Endothelial cell of umbilical vein (primary cell): ENCODE measurements at regions of chr2 and their contacts with region 1.

Region 1: DNA sequence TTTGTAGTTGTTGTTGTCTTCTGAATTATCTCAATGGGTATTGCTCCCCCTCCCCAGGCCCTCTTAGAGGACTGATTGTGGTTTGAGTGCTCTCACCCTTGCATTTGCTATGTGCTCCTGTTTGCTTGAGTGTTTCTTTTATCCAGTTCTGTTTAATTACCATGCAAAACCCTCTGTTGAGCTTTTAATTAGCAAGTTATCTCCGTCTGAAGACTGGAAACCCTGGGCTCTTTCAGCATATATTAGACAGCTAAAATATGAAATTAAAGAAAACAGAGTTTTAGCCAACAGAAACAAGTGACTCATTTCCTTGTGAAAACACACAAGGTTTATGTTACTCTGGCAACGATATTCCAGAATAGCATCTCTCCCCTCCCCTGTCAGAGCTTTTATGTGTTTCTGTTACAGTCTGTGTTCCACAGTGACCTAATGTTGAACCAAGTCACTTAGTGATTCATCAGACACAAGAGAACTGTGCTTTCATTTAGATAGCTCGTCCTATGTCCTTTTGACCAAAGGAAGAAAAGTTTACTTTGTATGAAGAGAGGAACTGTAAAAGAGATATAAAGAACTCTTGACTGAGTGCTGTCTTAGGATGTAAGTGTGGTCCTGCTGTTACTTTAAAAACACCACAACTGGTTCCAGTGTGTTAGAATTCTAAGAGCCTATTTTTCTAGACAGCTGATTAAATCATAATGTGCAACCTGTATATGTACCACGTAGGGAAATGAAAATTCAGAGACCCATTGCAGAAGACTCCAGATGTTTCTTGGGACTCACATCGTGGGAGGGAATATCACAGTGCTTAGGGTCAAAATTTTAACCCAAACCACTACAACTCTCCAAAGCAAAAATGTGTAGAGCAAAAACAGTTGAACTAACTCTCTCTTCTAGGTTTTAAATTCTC is 172.8 kb upstream of the RBMS1 start:
- DNase-seq: peak; percentile 99
- H3K4me3 ChIP-seq: peak overlapping the region in 1 of 3 experiments; percentile 33
- H3K27ac ChIP-seq: peak overlapping the region; percentile 89
- H3K4me1 ChIP-seq: peaks cover 14% of the 10 kb centered on the region
- H3K27me3 ChIP-seq: no peaks in the 10 kb centered on the region
- CTCF ChIP-seq: no peak
- POLR2A ChIP-seq: no peak

Region 2: DNA sequence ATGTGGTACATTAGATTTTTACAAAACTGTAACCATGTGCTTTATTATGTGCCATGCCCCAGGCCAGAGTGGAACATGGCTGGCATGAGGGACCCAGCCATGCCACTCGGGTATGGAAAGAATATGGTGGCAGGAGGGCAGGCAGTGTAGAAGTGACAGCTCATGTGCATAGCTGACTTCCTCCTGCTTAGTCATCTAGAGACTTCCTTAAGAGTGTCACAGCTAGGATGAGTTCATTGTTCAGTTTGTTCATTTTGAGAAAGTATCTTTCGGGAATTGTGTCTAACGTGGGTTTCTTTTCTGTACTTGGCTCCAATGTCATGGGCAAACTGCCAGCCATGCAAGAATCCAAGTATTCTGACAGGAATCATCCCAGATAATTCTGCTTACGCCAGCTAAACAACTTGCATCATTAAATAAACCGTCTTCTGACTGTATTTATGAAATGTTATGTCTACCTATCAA is 372.0 kb before region 1 on chr2:
- CTCF ChIA-PET with region 1: no interaction called
- POLR2A ChIA-PET with region 1: no interaction called
- dilution Hi-C with region 1: no loop called
- intact Hi-C with region 1: loop called (anchors 10 kb)
- DNase-seq: peak; percentile 51
- H3K4me3 ChIP-seq: no peak overlapping the region
- H3K27ac ChIP-seq: peak overlapping the region; percentile 29
- H3K4me1 ChIP-seq: peaks cover 54% of the 10 kb centered on the region
- H3K27me3 ChIP-seq: no peaks in the 10 kb centered on the region
- CTCF ChIP-seq: no peak
- POLR2A ChIP-seq: no peak

Region 3: DNA sequence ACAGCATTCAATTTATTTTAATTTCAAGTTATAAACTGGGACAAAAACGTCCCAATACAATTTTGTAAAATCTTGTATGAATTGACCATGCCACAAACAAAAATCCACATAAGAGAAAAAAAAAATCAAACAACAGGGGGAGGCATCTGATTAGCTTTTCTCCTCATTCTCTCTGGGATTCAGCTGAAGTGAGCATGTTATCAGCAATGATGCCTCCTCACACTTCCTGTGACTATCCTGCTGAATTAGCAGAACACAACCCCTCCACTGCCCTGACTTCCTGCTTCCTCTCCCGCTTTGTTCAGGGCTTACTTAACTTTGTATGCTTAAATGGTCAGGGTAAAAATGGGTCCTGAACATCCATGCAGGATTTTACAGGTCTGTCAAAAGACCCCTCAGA is 334.1 kb before region 1 on chr2:
- CTCF ChIA-PET with region 1: no interaction called
- POLR2A ChIA-PET with region 1: no interaction called
- dilution Hi-C with region 1: no loop called
- intact Hi-C with region 1: loop called (anchors 5 kb)
- DNase-seq: peak; percentile 70
- H3K4me3 ChIP-seq: no peak overlapping the region
- H3K27ac ChIP-seq: no peak overlapping the region
- H3K4me1 ChIP-seq: peaks cover 35% of the 10 kb centered on the region
- H3K27me3 ChIP-seq: no peaks in the 10 kb centered on the region
- CTCF ChIP-seq: peak in 1 of 2 donors; percentile 1
- POLR2A ChIP-seq: no peak

Region 4: GRCh38 chr2:160394153-160394552 is 272.3 kb before region 1 on chr2:
- CTCF ChIA-PET with region 1: no interaction called
- POLR2A ChIA-PET with region 1: no interaction called
- dilution Hi-C with region 1: no loop called
- intact Hi-C with region 1: no loop called
- DNase-seq: no peak
- H3K4me3 ChIP-seq: no peak overlapping the region
- H3K27ac ChIP-seq: no peak overlapping the region
- H3K4me1 ChIP-seq: peaks cover 46% of the 10 kb centered on the region
- H3K27me3 ChIP-seq: no peaks in the 10 kb centered on the region
- CTCF ChIP-seq: no peak
- POLR2A ChIP-seq: no peak

Region 5: DNA sequence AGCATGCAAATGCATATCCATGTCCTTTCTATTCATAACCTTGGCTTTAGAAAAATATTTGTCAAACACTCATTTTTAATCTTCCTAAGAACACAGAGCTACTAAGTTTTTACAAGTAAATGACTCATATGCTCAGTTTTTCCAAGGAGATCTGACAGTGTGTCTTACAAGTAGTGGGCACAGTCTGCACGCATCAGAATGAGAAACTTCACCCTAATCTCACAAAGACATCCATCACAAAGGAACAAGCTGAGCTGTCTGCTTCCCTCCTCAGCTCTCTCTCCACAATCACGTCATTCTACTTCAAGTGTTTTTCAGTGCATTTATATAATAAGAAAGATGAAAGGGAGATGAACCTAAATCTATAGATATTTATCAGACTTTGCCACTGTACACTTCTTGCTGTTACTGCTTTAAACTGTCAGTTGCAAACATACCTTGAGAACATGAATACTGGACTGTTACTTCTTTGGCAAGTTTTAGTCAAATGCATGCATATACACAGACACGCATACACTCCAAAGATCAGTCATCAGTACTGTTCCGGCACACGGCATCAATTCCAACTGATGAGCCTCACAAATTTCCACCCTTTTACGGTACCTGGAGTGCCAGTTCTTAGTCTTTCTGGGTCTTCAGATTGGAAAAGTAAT is 248.5 kb before region 1 on chr2:
- CTCF ChIA-PET with region 1: no interaction called
- POLR2A ChIA-PET with region 1: no interaction called
- dilution Hi-C with region 1: no loop called
- intact Hi-C with region 1: loop called (anchors 1 kb)
- DNase-seq: peak; percentile 84
- H3K4me3 ChIP-seq: peak overlapping the region in 1 of 3 experiments; percentile 55
- H3K27ac ChIP-seq: peak overlapping the region; percentile 97
- H3K4me1 ChIP-seq: peaks cover 51% of the 10 kb centered on the region
- H3K27me3 ChIP-seq: no peaks in the 10 kb centered on the region
- CTCF ChIP-seq: no peak
- POLR2A ChIP-seq: peak; percentile 53

Region 6: GRCh38 chr2:160590664-160591063 is 75.7 kb before region 1 on chr2:
- CTCF ChIA-PET with region 1: no interaction called
- POLR2A ChIA-PET with region 1: no interaction called
- dilution Hi-C with region 1: no loop called
- intact Hi-C with region 1: loop called (anchors 5 kb)
- DNase-seq: peak; percentile 10
- H3K4me3 ChIP-seq: no peak overlapping the region
- H3K27ac ChIP-seq: no peak overlapping the region
- H3K4me1 ChIP-seq: no peaks in the 10 kb centered on the region
- H3K27me3 ChIP-seq: no peaks in the 10 kb centered on the region
- CTCF ChIP-seq: no peak
- POLR2A ChIP-seq: no peak

Region 7: DNA sequence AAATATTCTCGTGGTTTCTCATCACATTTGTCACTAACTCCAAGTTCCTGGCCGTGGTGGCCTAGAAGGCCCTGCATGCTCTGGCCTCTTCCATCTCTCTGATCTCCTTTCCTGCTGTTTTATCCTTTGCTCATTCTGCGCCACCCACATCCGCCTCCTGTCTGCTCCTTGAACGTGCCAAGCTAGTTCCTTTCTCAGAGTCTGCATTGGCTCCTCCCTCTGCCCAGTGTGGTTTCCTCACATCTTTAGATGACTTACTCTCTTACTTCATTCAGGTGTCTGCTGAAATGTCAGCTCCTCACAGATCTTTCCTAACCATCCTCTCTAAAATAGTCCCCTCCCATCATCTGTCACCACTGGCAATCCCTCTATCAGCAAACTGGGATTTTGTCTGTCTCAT is 14.2 kb before region 1 on chr2:
- CTCF ChIA-PET with region 1: interaction called, 14 read pairs
- POLR2A ChIA-PET with region 1: interaction called, 13 read pairs
- dilution Hi-C with region 1: no loop called
- intact Hi-C with region 1: no loop called
- DNase-seq: peak; percentile 60
- H3K4me3 ChIP-seq: no peak overlapping the region
- H3K27ac ChIP-seq: peak overlapping the region; percentile 2
- H3K4me1 ChIP-seq: peaks cover 32% of the 10 kb centered on the region
- H3K27me3 ChIP-seq: peaks cover 0 to 2% of the 10 kb centered on the region in 2 experiments
- CTCF ChIP-seq: no peak
- POLR2A ChIP-seq: no peak

Region 8: GRCh38 chr2:160918906-160919503 is 252.6 kb after region 1 on chr2:
- CTCF ChIA-PET with region 1: interaction called, 11 read pairs
- POLR2A ChIA-PET with region 1: no interaction called
- dilution Hi-C with region 1: no loop called
- intact Hi-C with region 1: no loop called
- DNase-seq: peak; percentile 68
- H3K4me3 ChIP-seq: no peak overlapping the region
- H3K27ac ChIP-seq: no peak overlapping the region
- H3K4me1 ChIP-seq: peaks cover 11% of the 10 kb centered on the region
- H3K27me3 ChIP-seq: no peaks in the 10 kb centered on the region
- CTCF ChIP-seq: peak; percentile 68 to 73
- POLR2A ChIP-seq: no peak